HepG2 (cell line): ENCODE measurements at regions of chr12 and their contacts with region 1.

Region 1: GRCh38 chr12:89352492-89353187 is at the start of gene DUSP6:
- DNase-seq: peak; percentile 98
- ATAC-seq: peak; percentile 76
- H3K4me3 ChIP-seq: peak within 1 kb of the TSS; percentile 98 to 99 (median 98)
- H3K27ac ChIP-seq: peak within 1 kb of the TSS; percentile 99
- H3K4me1 ChIP-seq: peaks cover 48% of the 10 kb centered on the region
- H3K27me3 ChIP-seq: peaks cover 0 to 9% of the 10 kb centered on the region in 2 experiments; a peak in 1 of 5 replicates
- CTCF ChIP-seq: 0 out of 2 replicates have a peak, but pooled peaks have one; percentile 8
- EP300 ChIP-seq: peak in 1 of 2 experiments; percentile 92; a peak in 2 of 4 replicates
- POLR2A ChIP-seq: peak in 1 of 2 experiments; percentile 52; a peak in 2 of 4 replicates
- RAD21 ChIP-seq: 0 out of 2 replicates have a peak, but pooled peaks have one; percentile 11
- total RNA-seq, gene DUSP6: 37.0 and 40.9 TPM in 2 replicates

Region 2: GRCh38 chr12:88960213-88960878 is 392.3 kb before region 1 on chr12:
- CTCF ChIA-PET with region 1: no interaction called
- POLR2A ChIA-PET with region 1: no interaction called
- in situ Hi-C with region 1: no loop called
- intact Hi-C with region 1: no loop called
- DNase-seq: peak; percentile 59
- ATAC-seq: no peak
- H3K4me3 ChIP-seq: no peak overlapping the region
- H3K27ac ChIP-seq: no peak overlapping the region
- H3K4me1 ChIP-seq: peaks cover 23% of the 10 kb centered on the region
- H3K27me3 ChIP-seq: no peaks in the 10 kb centered on the region
- CTCF ChIP-seq: no peak
- EP300 ChIP-seq: peak in 1 of 2 experiments; percentile 27; a peak in 1 of 4 replicates
- POLR2A ChIP-seq: no peak
- RAD21 ChIP-seq: no peak

Region 3: GRCh38 chr12:89236748-89237388 is 115.8 kb before region 1 on chr12:
- CTCF ChIA-PET with region 1: no interaction called
- POLR2A ChIA-PET with region 1: no interaction called
- in situ Hi-C with region 1: no loop called
- intact Hi-C with region 1: no loop called
- DNase-seq: no peak
- ATAC-seq: no peak
- H3K4me3 ChIP-seq: no peak overlapping the region
- H3K27ac ChIP-seq: no peak overlapping the region
- H3K4me1 ChIP-seq: no peaks in the 10 kb centered on the region
- H3K27me3 ChIP-seq: no peaks in the 10 kb centered on the region
- CTCF ChIP-seq: no peak
- EP300 ChIP-seq: no peak
- POLR2A ChIP-seq: no peak
- RAD21 ChIP-seq: no peak

Region 4: DNA sequence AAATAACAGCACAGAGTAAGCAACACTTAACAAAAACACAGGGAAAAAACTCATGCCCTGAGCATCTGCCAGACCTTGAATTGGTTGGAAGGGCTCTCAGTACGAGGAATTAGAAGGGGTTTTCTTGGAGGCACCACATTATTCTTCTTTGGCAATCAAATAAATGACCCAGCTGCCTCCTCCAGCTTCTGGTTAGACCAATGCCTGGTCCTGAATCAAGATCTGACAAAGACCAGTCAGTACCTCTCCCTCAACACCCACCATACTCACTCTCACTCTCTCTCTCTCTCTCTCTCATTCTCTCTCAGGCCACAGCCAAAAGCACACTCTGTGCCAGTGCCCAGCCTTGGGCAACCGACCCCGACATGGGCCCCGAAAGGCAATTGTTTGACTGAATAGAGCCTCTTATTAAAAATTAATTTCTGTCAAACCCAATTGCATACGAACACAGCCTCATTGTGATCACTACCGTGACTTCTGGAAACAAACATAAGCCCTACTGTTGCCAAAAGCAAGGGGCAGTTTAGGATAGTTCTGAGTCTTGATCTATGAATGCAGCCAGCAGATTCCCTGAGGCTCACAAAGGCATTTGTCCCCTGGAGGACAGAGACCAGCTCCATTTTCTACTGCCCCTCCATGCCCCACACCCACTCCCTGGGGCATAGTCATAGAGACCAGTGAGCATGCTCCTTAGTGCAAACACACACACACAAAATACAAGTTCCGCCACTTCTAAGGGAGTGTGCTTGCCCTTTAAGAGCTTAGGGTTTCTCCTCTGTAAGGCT is 24.2 kb before region 1 on chr12:
- CTCF ChIA-PET with region 1: no interaction called
- POLR2A ChIA-PET with region 1: interaction called, 19 read pairs
- in situ Hi-C with region 1: no loop called
- intact Hi-C with region 1: no loop called
- DNase-seq: no peak
- ATAC-seq: peak; percentile 46
- H3K4me3 ChIP-seq: no peak overlapping the region
- H3K27ac ChIP-seq: no peak overlapping the region
- H3K4me1 ChIP-seq: peaks cover 34% of the 10 kb centered on the region
- H3K27me3 ChIP-seq: no peaks in the 10 kb centered on the region
- CTCF ChIP-seq: no peak
- EP300 ChIP-seq: no peak
- POLR2A ChIP-seq: no peak
- RAD21 ChIP-seq: no peak

Region 5: DNA sequence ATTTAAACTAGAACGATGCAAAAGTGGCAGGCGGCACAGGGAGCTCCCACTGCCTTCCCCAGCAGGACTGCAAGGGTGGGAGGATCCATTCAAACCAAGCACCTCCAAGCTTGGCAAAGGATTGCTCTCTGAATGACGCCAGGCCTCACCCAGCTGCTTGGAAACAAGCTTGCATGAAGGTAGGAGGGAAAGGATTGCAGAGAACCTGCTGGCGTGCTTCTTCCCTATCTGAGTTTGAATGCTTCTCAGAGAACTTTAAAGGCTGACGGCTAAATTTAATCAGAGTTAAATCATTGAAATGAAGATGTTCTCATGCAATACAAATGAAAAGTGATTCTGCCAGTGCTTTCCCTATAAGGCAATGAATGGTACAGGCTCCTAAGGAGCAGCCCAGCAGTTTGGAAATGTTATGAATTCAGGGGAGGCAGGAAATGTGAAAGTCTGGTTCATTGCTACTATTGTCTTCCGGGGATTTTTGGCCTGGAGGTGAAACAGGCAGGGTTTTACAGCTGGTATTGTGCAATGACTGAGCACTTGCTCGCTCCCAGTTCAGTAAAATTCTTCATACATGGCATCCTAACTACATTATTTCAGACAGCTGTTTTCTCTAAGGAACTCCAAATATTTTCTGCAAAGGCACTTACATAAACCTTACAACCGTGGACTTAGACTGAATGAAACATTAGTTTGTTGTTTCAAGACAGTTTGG is 31.6 kb after region 1 on chr12:
- CTCF ChIA-PET with region 1: no interaction called
- POLR2A ChIA-PET with region 1: interaction called, 430 read pairs
- in situ Hi-C with region 1: no loop called
- intact Hi-C with region 1: no loop called
- DNase-seq: peak; percentile 66
- ATAC-seq: peak; percentile 57
- H3K4me3 ChIP-seq: peak overlapping the region; percentile 0 to 51 (median 51)
- H3K27ac ChIP-seq: peak overlapping the region; percentile 81
- H3K4me1 ChIP-seq: peaks cover 87% of the 10 kb centered on the region
- H3K27me3 ChIP-seq: no peaks in the 10 kb centered on the region
- CTCF ChIP-seq: no peak
- EP300 ChIP-seq: peak in 1 of 2 experiments; percentile 37; a peak in 1 of 4 replicates
- POLR2A ChIP-seq: 0 out of 4 replicates have a peak, but pooled peaks of 1 of the 2 experiments have one; percentile 8
- RAD21 ChIP-seq: no peak

Region 6: GRCh38 chr12:89456565-89456964 is 103.9 kb after region 1 on chr12:
- CTCF ChIA-PET with region 1: no interaction called
- POLR2A ChIA-PET with region 1: interaction called, 10 read pairs
- in situ Hi-C with region 1: loop called (anchors 5 kb)
- intact Hi-C with region 1: loop called (anchors 1 kb)
- DNase-seq: no peak
- ATAC-seq: no peak
- H3K4me3 ChIP-seq: no peak overlapping the region
- H3K27ac ChIP-seq: no peak overlapping the region
- H3K4me1 ChIP-seq: peaks cover 14% of the 10 kb centered on the region
- H3K27me3 ChIP-seq: no peaks in the 10 kb centered on the region
- CTCF ChIP-seq: no peak
- EP300 ChIP-seq: no peak
- POLR2A ChIP-seq: no peak
- RAD21 ChIP-seq: no peak

Region 7: GRCh38 chr12:89648211-89648930 is 295.7 kb after region 1 on chr12:
- CTCF ChIA-PET with region 1: no interaction called
- POLR2A ChIA-PET with region 1: no interaction called
- in situ Hi-C with region 1: no loop called
- intact Hi-C with region 1: loop called (anchors 10 kb)
- DNase-seq: peak; percentile 56
- ATAC-seq: peak; percentile 88
- H3K4me3 ChIP-seq: no peak overlapping the region
- H3K27ac ChIP-seq: peak overlapping the region; percentile 56
- H3K4me1 ChIP-seq: peaks cover 78% of the 10 kb centered on the region
- H3K27me3 ChIP-seq: no peaks in the 10 kb centered on the region
- CTCF ChIP-seq: no peak
- EP300 ChIP-seq: no peak; a peak in 1 of 4 replicates
- POLR2A ChIP-seq: no peak
- RAD21 ChIP-seq: no peak